PC-3 (cell line): ENCODE measurements at regions of chr13 and their contacts with region 1.

Region 1: DNA sequence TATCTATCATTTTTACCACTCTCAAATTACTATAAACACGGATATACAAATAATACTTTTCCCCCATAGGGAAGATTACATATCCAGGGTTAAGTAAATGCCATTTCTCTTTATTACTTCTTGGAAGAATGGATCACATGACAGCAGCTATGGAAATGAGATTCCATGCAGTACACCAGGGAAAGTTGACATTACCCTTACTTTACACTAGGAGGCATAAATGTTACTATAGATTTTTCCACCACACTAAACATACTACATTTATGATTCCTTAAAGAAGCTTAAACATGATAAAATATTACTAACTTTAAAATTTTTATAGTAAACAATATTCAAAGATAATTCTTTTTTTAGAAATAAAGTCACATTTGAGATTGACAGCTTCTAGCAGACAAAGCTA is 611.4 kb downstream of the PCDH9 start:
- DNase-seq: peak; percentile 50
- ATAC-seq: peak; percentile 73
- H3K4me3 ChIP-seq: no peak overlapping the region
- H3K27ac ChIP-seq: no peak overlapping the region
- H3K4me1 ChIP-seq: no peaks in the 10 kb centered on the region
- H3K27me3 ChIP-seq: no peaks in the 10 kb centered on the region
- CTCF ChIP-seq: peak; percentile 46

Region 2: DNA sequence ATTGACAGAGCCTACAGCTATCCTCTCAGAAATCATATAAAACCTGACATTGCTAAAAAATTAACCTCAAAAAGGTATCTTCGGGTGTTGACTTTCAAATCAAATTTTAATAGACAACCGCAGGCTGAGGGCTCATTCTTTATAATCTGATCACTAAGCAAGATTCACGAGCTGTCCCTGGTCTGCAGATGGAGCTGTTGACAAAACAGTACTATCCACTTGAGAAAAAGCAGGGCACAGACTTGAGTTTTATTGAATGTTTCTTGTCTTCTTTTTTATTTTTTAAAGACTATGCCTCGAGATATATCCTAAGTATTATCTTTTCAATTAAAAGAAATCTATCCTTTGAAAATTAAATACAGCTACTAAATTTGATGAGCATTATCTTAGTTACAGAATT is 70.9 kb after region 1 on chr13:
- CTCF ChIA-PET with region 1: no interaction called
- POLR2A ChIA-PET with region 1: no interaction called
- intact Hi-C with region 1: loop called (anchors 5 kb)
- DNase-seq: peak; percentile 25
- ATAC-seq: peak; percentile 56
- H3K4me3 ChIP-seq: no peak overlapping the region
- H3K27ac ChIP-seq: no peak overlapping the region
- H3K4me1 ChIP-seq: no peaks in the 10 kb centered on the region
- H3K27me3 ChIP-seq: no peaks in the 10 kb centered on the region
- CTCF ChIP-seq: peak; percentile 35; the same call in 1 of the 2 replicates

Region 3: GRCh38 chr13:66723591-66723990 is 104.9 kb after region 1 on chr13:
- CTCF ChIA-PET with region 1: no interaction called
- POLR2A ChIA-PET with region 1: no interaction called
- intact Hi-C with region 1: no loop called
- DNase-seq: no peak
- ATAC-seq: no peak
- H3K4me3 ChIP-seq: no peak overlapping the region
- H3K27ac ChIP-seq: no peak overlapping the region
- H3K4me1 ChIP-seq: no peaks in the 10 kb centered on the region
- H3K27me3 ChIP-seq: no peaks in the 10 kb centered on the region
- CTCF ChIP-seq: no peak

Region 4: DNA sequence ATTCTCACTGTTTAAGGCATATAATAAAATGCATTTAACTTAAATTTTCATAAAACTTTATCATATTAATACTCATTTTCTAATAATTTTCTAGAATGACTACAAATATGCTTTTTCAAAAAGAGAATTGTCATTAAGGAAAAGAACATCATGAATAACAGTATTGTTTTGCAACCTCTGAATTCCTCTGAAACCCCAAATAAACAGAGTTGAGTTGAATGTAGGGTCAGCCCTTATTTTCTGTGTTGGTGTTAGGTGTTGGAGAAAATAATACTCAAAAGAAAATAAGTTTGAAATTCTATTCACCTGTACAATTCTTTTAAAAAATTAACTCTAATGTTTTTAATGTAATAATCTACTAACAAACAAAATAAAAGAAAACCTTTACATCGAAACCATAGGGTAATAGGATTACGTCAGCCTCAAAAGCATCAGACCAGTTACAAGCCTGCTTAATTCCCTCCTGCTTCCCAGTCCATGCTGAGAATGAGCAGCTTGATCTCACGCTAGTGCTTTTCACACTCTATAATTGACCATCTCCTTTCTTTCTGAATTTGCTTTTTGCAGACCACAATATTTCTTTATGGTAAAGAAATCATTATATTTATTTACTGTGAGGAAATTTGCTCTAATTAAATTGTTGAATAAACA is 450.5 kb after region 1 on chr13:
- CTCF ChIA-PET with region 1: no interaction called
- POLR2A ChIA-PET with region 1: no interaction called
- intact Hi-C with region 1: no loop called
- DNase-seq: no peak
- ATAC-seq: no peak
- H3K4me3 ChIP-seq: no peak overlapping the region
- H3K27ac ChIP-seq: no peak overlapping the region
- H3K4me1 ChIP-seq: no peaks in the 10 kb centered on the region
- H3K27me3 ChIP-seq: no peaks in the 10 kb centered on the region
- CTCF ChIP-seq: no peak